Endothelial cell of umbilical vein (primary cell): ENCODE measurements at regions of chr1 and their contacts with region 1.

Region 1: DNA sequence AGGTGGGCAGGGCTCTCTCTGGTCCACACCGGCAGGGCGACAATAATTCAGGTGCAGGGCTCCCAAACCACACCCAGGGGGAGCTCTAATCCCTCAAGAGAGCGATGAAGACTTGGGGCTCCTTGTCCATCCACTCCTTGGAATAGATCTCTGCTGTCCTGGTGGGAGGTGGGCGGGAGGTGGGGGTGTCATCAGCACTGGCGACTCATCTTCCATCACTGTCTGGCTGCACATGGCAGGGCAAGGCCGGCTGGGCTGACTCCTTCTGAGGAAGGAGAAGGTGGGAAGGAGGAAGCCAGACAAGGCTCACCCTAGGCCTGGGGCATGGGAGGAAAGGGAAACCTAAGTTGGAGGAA is 29.3 kb downstream of the TNNT2 start:
- DNase-seq: peak; percentile 17
- H3K4me3 ChIP-seq: no peak overlapping the region
- H3K27ac ChIP-seq: no peak overlapping the region
- H3K4me1 ChIP-seq: no peaks in the 10 kb centered on the region
- H3K27me3 ChIP-seq: peaks cover 6 to 7% of the 10 kb centered on the region in 2 experiments
- CTCF ChIP-seq: peak; percentile 54 to 65
- POLR2A ChIP-seq: no peak

Region 2: GRCh38 chr1:201191653-201192260 is 156.4 kb before region 1 on chr1:
- CTCF ChIA-PET with region 1: no interaction called
- POLR2A ChIA-PET with region 1: no interaction called
- dilution Hi-C with region 1: no loop called
- intact Hi-C with region 1: no loop called
- DNase-seq: peak; percentile 13
- H3K4me3 ChIP-seq: no peak overlapping the region
- H3K27ac ChIP-seq: no peak overlapping the region
- H3K4me1 ChIP-seq: no peaks in the 10 kb centered on the region
- H3K27me3 ChIP-seq: peaks cover 5 to 13% of the 10 kb centered on the region in 2 experiments
- CTCF ChIP-seq: no peak
- POLR2A ChIP-seq: no peak

Region 3: DNA sequence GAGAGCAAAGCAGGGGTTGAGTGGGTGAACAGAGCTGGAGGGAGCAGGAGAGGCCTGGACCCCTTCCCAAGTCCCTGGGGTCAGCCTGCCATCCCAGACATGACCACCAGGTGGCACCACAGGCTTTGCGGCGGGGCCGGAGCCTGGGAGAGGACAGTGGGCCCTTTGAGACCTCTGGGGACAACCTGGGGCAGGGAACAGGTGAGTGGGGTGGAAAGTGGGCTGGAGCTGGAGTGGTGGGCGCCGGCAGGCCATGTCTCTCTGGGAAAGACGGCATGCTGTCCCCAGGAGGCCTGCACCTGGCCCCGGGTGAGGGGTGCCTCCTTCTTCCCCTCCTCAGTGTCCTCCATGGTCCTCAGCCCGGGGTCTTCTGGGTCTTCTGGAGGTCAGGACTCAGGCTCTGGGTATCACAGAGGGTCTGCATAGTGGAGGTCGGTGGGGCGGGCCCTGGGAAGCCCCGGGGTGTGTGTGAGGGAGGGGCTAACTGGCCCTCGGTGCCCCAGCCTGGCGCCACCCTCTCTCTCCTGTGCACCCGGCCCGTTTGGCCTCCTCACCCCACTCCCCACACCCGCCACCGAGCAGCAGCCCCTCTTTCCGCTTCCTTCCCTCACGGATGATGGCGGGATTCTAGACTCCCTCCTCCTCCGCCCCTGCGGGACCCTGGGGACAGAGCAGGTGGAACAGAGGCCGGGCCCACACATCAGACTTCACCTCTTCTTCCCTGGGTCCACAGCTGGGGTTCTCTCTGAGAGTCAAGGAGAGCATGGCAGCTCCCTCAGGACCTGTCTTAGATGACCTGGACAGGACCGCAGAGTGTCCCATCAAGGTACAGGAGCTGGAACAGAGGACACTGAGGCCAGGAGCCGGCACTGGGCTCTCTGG is 93.3 kb before region 1 on chr1:
- CTCF ChIA-PET with region 1: interaction called, 34 read pairs
- POLR2A ChIA-PET with region 1: no interaction called
- dilution Hi-C with region 1: no loop called
- intact Hi-C with region 1: loop called (anchors 1 kb)
- DNase-seq: peak; percentile 33
- H3K4me3 ChIP-seq: no peak overlapping the region
- H3K27ac ChIP-seq: no peak overlapping the region
- H3K4me1 ChIP-seq: no peaks in the 10 kb centered on the region
- H3K27me3 ChIP-seq: peaks cover 3 to 5% of the 10 kb centered on the region in 2 experiments
- CTCF ChIP-seq: peak; percentile 90 to 97
- POLR2A ChIP-seq: no peak

Region 4: DNA sequence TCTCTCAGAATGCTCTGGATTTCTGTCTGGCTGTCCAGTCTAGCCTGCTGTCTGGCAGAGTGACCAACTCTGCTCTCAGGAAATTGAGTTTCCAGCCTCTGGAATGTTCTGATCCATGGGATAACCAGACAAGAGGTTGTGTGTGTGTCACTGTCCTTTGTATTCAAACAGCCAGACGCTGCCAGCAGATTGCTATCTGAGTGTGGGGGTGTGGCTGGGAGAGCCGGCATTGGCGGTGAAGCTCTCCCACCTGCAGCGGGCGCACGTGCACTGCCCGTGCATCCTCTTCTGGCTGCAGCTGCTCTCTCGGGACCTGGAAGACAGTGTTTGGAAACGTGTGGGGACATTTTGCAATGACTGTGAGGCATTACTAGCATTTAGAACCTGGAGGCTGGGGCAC is 38.8 kb before region 1 on chr1:
- CTCF ChIA-PET with region 1: interaction called, 12 read pairs
- POLR2A ChIA-PET with region 1: no interaction called
- dilution Hi-C with region 1: no loop called
- intact Hi-C with region 1: no loop called
- DNase-seq: peak; percentile 75
- H3K4me3 ChIP-seq: no peak overlapping the region
- H3K27ac ChIP-seq: no peak overlapping the region
- H3K4me1 ChIP-seq: peaks cover 8% of the 10 kb centered on the region
- H3K27me3 ChIP-seq: peaks cover 4 to 11% of the 10 kb centered on the region in 2 experiments
- CTCF ChIP-seq: peak in 1 of 2 donors; percentile 29
- POLR2A ChIP-seq: no peak

Region 5: DNA sequence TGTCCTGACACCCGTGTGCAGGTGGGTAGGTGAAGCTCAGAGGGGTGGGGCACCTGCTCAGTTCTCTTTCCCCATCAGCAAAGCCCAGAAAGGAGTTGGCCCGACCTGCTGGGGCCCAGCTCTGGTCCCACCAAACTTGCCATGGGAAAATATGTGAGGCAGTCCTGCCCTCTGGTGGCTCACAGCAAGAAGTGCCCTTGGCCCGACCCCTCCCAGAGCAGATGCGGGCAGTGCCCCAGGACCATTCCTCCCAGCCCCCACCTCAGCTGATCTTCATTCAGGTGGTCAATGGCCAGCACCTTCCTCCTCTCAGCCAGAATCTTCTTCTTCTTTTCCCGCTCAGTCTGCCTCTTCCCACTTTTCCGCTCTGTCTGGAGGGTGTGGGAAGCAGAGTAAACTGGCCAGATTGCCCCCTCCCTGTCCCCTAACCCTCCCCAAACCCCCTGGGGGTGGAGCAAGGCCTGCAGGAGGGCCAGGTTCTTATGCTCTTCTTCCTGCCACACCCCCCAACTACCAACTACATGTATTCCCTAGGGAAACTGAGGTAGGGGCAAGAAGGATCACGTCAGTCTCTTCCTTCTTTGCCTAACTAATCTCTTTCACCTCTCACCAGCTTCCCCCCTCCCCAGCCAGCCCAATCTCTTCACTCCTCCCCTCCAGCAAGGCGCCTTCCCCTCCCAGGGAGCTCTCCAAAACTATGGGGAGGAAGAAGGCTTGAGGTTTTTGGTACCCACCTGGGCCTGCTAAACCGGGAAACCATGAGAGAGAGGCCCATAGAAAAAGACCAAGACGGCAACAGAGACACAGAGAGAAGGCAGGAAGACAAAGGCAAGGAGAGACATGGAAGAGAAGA is 13.7 kb after region 1 on chr1:
- CTCF ChIA-PET with region 1: interaction called, 36 read pairs
- POLR2A ChIA-PET with region 1: interaction called, 3 read pairs
- dilution Hi-C with region 1: no loop called
- intact Hi-C with region 1: loop called (anchors 1 kb)
- DNase-seq: peak; percentile 26
- H3K4me3 ChIP-seq: no peak overlapping the region
- H3K27ac ChIP-seq: no peak overlapping the region
- H3K4me1 ChIP-seq: peaks cover 6% of the 10 kb centered on the region
- H3K27me3 ChIP-seq: peaks cover 0 to 3% of the 10 kb centered on the region in 2 experiments
- CTCF ChIP-seq: peak; percentile 72 to 84
- POLR2A ChIP-seq: no peak

Region 6: DNA sequence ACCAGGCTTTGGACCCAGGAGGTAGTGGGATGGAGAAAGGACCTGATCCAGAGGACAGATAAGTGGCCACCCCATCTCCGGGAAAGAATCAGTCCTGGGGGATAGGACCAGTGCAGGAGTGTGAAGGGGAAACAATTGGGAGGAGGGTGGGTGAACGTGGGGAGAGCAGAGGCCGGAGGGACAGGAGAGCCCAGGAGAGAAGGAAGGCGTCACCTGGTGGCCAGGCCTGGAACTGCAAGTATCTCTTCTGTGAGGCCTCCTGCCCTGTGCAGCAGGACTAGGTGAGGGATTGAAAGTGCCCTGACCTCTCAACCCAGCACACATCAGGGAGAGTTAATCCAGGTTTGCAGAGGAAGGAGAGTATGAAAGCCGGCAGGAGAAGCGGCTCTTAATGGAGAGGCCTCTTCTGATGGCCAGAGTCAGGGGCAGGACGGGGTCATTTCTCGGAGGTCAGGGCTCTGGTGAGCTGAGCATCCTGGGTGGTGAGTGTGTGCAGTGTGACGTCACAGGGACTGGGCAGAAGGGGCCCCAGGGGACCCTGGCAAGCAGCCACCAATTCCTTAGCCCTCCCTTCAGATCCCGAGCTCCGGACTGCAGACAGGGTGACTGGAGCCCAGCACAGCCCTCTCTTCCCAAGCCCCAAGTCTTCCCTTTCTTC is 60.1 kb after region 1 on chr1:
- CTCF ChIA-PET with region 1: interaction called, 10 read pairs
- POLR2A ChIA-PET with region 1: no interaction called
- dilution Hi-C with region 1: no loop called
- intact Hi-C with region 1: loop called (anchors 1 kb)
- DNase-seq: peak; percentile 52
- H3K4me3 ChIP-seq: no peak overlapping the region
- H3K27ac ChIP-seq: no peak overlapping the region
- H3K4me1 ChIP-seq: no peaks in the 10 kb centered on the region
- H3K27me3 ChIP-seq: peaks cover 7 to 8% of the 10 kb centered on the region in 2 experiments
- CTCF ChIP-seq: peak; percentile 91 to 98
- POLR2A ChIP-seq: no peak

Region 7: DNA sequence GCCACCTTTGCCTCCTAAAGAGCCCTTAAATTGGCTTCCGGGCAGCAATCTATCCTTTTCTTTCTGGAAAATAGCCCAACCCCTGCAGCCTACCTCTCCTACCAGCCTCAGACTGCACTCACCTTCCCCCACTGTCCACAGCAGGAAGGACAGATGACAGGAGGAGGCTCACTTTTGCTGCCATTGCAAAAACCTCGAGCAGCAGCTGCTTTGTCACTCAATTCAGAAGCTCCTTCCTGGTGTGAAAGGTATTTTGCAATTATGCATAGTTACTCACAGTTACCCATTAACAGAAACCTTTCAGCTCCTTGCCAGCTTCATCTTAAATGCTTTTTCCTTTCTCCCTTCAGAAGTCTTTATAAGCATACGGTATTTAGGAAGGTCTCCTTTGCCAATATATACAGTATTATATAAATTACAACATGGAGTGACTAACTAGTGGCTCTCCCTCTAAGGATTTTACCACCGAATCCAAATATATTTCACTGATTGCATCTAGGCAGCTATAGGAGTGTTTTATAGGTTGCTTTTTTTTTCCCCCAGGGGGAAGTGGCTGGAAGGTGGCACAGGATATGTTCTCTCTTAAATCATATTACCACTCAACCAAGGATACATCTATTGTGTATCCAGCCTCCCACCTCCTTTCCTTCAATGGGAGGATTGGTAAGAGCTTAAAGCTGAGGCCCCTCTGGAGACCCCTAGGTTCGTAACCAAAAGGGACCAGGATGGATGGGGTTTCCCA is 338.7 kb after region 1 on chr1:
- CTCF ChIA-PET with region 1: no interaction called
- POLR2A ChIA-PET with region 1: no interaction called
- dilution Hi-C with region 1: no loop called
- intact Hi-C with region 1: no loop called
- DNase-seq: no peak
- H3K4me3 ChIP-seq: no peak overlapping the region
- H3K27ac ChIP-seq: no peak overlapping the region
- H3K4me1 ChIP-seq: no peaks in the 10 kb centered on the region
- H3K27me3 ChIP-seq: no peaks in the 10 kb centered on the region
- CTCF ChIP-seq: no peak
- POLR2A ChIP-seq: no peak